CD8-positive, alpha-beta memory T cell (primary cell): ENCODE measurements at regions of chr13 and their contacts with region 1.

Region 1: DNA sequence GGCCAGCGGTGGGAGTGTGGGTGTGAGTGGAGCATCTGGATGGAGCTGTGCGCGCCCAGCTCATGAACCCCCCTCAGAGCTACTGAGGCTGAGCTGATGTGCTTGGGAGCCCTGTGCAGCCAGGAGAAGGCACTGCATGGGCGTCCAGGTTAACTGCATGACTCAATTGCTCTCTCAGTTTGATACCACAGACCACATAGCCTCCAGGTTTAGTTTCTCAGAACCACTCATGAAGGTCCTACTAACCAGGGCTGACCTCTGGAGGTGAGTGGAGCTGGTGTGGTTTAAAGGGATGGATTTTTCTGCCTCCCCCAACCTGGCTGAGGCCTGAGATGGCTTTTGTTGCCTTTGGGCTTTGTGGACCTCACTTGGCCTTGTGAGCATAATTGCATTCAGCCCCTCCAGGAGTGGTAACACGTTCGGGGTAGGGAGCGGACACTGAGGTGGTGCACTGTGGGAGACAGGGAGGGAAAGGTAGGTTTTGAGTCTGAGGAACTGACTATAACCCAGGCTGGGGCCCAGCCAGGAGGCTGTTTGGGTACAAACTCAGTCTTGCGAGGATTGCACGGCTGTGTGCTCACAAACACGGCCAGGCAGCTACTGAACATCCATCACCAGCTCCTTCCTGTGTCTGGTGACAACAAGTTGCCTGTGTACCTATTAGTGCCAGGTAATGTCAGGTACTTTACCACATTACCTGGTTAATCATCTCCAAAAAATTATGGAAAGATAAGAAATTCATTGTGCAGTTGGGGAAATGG is 97.5 kb downstream of the RGCC start:
- DNase-seq: no peak
- H3K4me3 ChIP-seq: no peak overlapping the region
- H3K4me3 Mint-ChIP-seq: no peak overlapping the region
- H3K27ac ChIP-seq: no peak overlapping the region
- H3K27ac Mint-ChIP-seq: no peak overlapping the region
- H3K4me1 ChIP-seq: no peaks in the 10 kb centered on the region
- H3K4me1 Mint-ChIP-seq: no peaks in the 10 kb centered on the region
- H3K27me3 ChIP-seq: no peaks in the 10 kb centered on the region
- H3K27me3 Mint-ChIP-seq: peaks cover 0 to 1% of the 10 kb centered on the region in 2 donors

Region 2: DNA sequence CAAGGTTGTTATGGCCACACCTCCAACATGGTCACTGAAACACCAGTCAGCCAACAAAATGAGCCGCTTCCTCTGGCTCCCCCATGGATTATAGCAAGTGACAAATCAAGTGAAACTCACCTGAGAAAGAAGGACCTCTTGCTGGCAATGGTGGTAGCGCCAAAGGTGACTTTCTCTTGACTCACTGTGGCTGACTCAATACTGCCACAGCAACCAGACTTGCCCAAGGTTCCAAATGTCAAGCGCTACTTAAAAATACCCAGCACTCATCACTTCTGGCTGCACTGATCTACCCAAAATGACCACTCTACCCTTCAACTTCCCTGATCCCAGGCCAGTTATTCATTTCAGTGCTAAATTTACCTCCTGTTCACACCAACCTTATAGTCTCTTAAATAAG is 1383.8 kb before region 1 on chr13:
- CTCF ChIA-PET with region 1: no interaction called
- POLR2A ChIA-PET with region 1: interaction called, 10 read pairs
- DNase-seq: no peak
- H3K4me3 ChIP-seq: no peak overlapping the region
- H3K4me3 Mint-ChIP-seq: no peak overlapping the region
- H3K27ac ChIP-seq: no peak overlapping the region
- H3K27ac Mint-ChIP-seq: no peak overlapping the region
- H3K4me1 ChIP-seq: peaks cover 11% of the 10 kb centered on the region
- H3K4me1 Mint-ChIP-seq: peaks cover 5 to 11% (median 9%) of the 10 kb centered on the region in 3 donors
- H3K27me3 ChIP-seq: no peaks in the 10 kb centered on the region
- H3K27me3 Mint-ChIP-seq: no peaks in the 10 kb centered on the region